Lower lobe of right lung (tissue), 2 donors: ENCODE measurements at regions of chr2 and their contacts with region 1.

Region 1: DNA sequence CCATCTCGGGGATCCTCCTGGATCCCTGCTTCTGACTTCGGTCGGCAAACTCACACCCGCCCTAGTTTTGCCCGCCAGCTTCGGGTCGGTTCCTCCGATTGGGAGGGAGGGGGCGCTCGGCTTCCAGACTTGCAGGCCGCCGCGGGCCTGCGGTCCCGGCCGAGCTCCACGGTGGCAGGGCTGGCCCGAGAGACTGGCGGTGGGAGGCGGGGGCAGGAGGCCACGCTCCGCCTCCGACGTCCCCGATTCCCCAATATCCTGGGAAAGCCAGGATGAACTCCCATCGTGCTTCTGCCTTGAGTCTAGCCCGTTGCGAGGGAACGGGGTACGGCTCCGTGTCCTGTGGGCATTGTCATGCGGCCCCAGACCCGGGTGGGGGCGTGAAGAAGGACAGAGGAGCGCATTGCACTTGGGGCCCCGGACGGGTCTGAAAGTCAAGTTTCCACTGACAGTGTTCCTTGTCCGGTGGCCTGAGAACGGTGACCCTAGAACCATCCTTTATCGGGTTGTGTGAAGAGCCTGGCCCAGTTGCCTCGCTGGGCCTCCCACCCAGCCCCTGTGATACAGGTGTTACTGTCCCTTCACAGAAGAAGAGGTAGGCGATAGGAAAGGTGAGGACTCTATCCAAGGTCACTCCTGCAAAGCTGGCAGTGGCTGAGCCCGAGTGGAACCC is 2.4 kb upstream of the INHBB start:
- DNase-seq: peak; percentile 88
- ATAC-seq: peak; percentile 83
- H3K4me3 ChIP-seq: peak overlapping the region; percentile 57
- H3K27ac ChIP-seq: peak overlapping the region; percentile 11
- H3K4me1 ChIP-seq: peaks cover 41% of the 10 kb centered on the region
- H3K27me3 ChIP-seq: peaks cover 81% of the 10 kb centered on the region
- CTCF ChIP-seq: peak; percentile 85

Region 2: GRCh38 chr2:120539937-120540718 is 196.6 kb after region 1 on chr2:
- intact Hi-C with region 1: no loop called
- DNase-seq: peak; percentile 61
- ATAC-seq: peak; percentile 84 to 88
- H3K4me3 ChIP-seq: no peak overlapping the region
- H3K27ac ChIP-seq: no peak overlapping the region
- H3K4me1 ChIP-seq: peaks cover 16% of the 10 kb centered on the region
- H3K27me3 ChIP-seq: peaks cover 5% of the 10 kb centered on the region
- CTCF ChIP-seq: no peak

Region 3: GRCh38 chr2:120680136-120680761 is 336.7 kb after region 1 on chr2:
- intact Hi-C with region 1: loop called (anchors 5 kb)
- DNase-seq: peak; percentile 84
- ATAC-seq: peak; percentile 85
- H3K4me3 ChIP-seq: no peak overlapping the region
- H3K27ac ChIP-seq: no peak overlapping the region
- H3K4me1 ChIP-seq: peaks cover 5% of the 10 kb centered on the region
- H3K27me3 ChIP-seq: peaks cover 15% of the 10 kb centered on the region
- CTCF ChIP-seq: peak; percentile 35